ENCODE measurements at regions of chr20 and their contacts with region 1.

Region 1: GRCh38 chr20:51703400-51704287 is 64.5 kb downstream of the ATP9A start:
- H3K4me3 Mint-ChIP-seq: no peak overlapping the region
- H3K27ac Mint-ChIP-seq: no peak overlapping the region
- H3K4me1 Mint-ChIP-seq: peaks cover 10% of the 10 kb centered on the region
- H3K27me3 Mint-ChIP-seq: peaks cover 3% of the 10 kb centered on the region

Region 2: DNA sequence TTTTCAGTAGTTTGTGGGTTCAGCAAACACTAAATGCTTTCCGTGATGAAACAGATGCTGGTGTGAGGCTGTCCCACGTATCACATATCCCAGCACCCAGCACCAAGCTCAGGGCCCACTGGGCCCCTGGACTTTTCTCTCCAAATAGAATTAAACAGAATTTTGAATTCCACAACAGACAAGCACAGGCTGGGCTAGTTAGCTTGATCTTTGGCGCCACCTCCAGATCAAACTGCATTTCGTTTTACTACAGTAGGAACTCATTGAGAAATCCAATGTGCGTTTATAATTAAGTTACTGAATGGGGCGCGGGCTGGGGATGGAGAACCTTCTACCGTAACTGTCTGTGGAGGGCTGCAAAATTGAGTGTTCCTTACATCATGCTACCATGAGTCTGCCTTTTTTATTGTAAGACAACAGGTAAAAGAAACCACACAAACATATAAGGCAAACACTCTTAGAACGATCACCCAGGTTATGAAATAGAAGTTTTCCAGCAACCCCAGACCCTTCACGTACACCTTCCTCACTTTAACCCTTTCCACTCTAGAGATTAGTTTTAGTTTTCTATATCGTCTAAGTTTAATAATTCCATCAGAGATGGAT is 380.1 kb after region 1 on chr20:
- intact Hi-C with region 1: loop called (anchors 5 kb)
- H3K4me3 Mint-ChIP-seq: no peak overlapping the region
- H3K27ac Mint-ChIP-seq: no peak overlapping the region
- H3K4me1 Mint-ChIP-seq: peaks cover 4% of the 10 kb centered on the region
- H3K27me3 Mint-ChIP-seq: no peaks in the 10 kb centered on the region

Measured in dendritic cell treated with granulocyte-macrophage colony-stimulating factor and Interleukin-4, amounts not matched to agents 40 ng/mL and 50 ng/mL, for 4 days (primary cell).